Calu3 (cell line): ENCODE measurements at regions of chr2 and their contacts with region 1.

Region 1: DNA sequence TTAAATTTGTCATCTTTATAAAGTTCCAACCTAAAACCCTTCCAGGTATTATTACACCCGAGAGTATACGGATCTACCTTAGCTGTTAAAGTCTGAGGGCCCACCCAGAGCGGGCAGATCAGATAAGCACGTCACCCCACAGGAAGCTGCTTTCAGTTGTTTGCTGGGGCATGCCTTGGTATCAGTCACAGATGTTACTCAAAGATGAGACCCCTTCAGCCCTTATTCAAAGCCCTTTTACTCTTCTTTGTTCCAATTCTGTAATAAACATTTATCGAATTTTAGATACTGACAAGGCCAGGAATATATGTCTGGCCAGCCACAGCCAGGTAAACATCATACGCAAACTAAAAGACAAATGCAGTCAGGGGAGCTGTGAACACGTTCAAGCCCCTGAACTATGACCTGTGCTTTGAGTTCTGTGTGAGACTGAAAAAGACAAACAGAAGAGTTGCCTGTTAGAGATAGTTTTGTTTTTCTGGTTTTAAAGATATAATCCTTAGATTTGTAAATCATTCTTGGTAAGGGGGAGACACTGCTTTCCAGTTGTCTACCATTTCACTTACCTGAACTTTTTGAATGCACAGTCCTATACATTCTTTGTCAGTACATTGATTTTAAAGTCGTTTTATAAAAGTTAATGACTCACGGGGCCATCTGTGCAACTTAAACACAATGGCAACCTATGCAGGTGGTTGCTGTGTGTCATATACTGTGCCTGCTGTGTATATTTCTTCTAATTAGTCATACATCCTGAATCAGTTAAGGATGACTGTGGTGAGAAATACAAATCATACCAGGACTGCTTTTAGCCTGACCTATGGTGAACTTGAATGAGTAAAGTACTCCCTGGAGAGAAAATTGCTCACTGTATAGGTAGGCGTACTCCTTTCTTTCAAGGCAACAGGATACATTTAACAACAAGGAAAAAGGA is 100.5 kb upstream of the ITPRID2 start:
- DNase-seq: peak; percentile 50
- H3K4me3 Mint-ChIP-seq: peak overlapping the region; percentile 57
- H3K27ac Mint-ChIP-seq: peak overlapping the region; percentile 98
- H3K4me1 Mint-ChIP-seq: peaks cover 52% of the 10 kb centered on the region
- H3K27me3 Mint-ChIP-seq: no peaks in the 10 kb centered on the region
- CTCF ChIP-seq: no peak

Region 2: DNA sequence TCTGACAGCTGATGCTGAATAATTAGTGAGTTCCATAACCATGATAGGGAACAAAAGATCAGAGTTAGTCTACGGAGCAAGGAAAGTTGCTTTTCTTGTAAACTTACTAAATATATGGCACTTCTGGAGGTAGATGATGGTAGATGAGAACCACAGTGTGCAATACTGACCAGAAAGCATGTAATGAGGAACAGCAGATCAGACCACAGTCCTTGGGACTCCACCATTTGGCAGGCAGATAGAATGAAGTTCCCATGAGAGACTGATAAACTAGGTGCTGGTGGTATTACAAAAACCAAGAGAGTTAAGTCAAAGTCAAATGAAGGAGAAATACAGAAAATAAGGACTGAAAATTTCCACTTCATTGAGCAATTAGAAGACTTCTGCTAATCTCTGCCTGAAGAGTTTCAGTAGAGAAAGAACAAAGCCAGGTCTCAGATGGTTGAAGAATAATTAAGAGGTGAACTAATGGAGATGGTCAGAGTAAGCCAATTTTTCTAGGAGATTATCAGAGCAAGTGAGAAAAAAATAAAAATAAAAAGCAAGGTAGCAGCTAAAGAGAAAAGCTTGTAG is 144.5 kb before region 1 on chr2:
- CTCF ChIA-PET with region 1: no interaction called
- intact Hi-C with region 1: no loop called
- DNase-seq: no peak
- H3K4me3 Mint-ChIP-seq: no peak overlapping the region
- H3K27ac Mint-ChIP-seq: no peak overlapping the region
- H3K4me1 Mint-ChIP-seq: peaks cover 8% of the 10 kb centered on the region
- H3K27me3 Mint-ChIP-seq: no peaks in the 10 kb centered on the region
- CTCF ChIP-seq: no peak

Region 3: DNA sequence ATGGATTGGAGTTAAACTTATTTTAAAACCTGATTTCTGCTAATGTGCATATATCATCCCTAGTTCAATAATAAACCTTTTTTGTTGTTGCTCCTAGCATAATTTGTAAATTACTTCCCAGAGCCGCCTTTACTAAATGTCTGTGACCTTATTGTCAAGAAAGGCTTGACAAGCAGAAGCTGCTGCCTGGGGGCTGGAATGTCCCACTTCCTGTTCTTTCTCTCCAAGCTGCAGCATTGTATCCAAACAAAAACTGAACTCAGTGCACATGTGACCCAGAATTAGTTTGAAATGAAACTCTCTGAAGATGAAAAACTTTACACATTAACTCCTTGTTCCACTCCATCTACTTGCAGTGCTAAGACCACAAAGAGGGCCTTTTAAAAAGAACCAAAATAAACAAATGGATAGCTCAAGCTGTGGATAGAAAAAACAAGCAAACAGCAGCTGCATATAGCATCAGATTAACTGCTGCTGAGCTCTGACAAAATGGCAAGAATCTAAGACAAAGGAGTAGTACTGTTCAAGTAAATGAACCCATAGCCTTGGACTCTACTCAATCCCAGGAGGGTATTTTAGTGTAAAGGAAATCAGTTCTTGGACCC is 10.8 kb before region 1 on chr2:
- CTCF ChIA-PET with region 1: interaction called, 8 read pairs
- intact Hi-C with region 1: loop called (anchors 1 kb)
- DNase-seq: peak; percentile 31
- H3K4me3 Mint-ChIP-seq: no peak overlapping the region
- H3K27ac Mint-ChIP-seq: peak overlapping the region; percentile 90
- H3K4me1 Mint-ChIP-seq: peaks cover 65% of the 10 kb centered on the region
- H3K27me3 Mint-ChIP-seq: no peaks in the 10 kb centered on the region
- CTCF ChIP-seq: no peak

Region 4: GRCh38 chr2:181810823-181811695 is 20.1 kb after region 1 on chr2:
- CTCF ChIA-PET with region 1: interaction called, 5 read pairs
- intact Hi-C with region 1: loop called (anchors 1 kb)
- DNase-seq: peak; percentile 67
- H3K4me3 Mint-ChIP-seq: peak overlapping the region; percentile 38
- H3K27ac Mint-ChIP-seq: peak overlapping the region; percentile 95
- H3K4me1 Mint-ChIP-seq: peaks cover 78% of the 10 kb centered on the region
- H3K27me3 Mint-ChIP-seq: no peaks in the 10 kb centered on the region
- CTCF ChIP-seq: no peak

Region 5: DNA sequence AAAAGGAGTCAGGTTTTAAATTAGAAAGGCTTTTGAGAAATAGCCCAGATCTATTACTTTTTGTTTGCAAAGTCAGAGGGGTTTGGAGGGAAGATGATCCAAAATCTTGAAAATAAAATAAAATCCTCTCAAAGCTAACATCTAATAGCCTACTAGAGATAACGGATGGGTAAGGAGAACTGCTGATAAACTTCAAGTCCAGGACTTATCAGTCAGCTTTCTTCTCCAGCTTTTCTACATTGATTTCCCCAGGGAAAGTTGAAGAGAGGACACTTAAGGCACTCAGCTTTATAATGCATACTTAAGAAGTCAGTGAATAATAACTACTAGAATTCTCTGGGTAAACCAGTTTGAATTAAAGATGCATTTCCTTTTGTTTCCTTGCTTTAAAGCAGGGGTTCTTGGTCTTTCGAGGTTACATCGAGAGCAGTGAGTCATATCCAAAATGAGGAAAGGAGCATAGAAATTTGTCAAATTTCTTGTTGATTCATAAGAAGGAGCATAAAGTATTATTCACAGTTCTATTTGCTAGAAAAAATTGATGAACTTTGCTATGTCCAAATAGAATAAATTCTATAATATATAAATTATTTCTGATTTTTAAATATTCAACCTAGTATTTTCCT is 57.4 kb after region 1 on chr2:
- CTCF ChIA-PET with region 1: interaction called, 3 read pairs
- intact Hi-C with region 1: loop called (anchors 2 kb)
- DNase-seq: no peak
- H3K4me3 Mint-ChIP-seq: no peak overlapping the region
- H3K27ac Mint-ChIP-seq: peak overlapping the region; percentile 67
- H3K4me1 Mint-ChIP-seq: peaks cover 54% of the 10 kb centered on the region
- H3K27me3 Mint-ChIP-seq: no peaks in the 10 kb centered on the region
- CTCF ChIP-seq: no peak

Region 6: DNA sequence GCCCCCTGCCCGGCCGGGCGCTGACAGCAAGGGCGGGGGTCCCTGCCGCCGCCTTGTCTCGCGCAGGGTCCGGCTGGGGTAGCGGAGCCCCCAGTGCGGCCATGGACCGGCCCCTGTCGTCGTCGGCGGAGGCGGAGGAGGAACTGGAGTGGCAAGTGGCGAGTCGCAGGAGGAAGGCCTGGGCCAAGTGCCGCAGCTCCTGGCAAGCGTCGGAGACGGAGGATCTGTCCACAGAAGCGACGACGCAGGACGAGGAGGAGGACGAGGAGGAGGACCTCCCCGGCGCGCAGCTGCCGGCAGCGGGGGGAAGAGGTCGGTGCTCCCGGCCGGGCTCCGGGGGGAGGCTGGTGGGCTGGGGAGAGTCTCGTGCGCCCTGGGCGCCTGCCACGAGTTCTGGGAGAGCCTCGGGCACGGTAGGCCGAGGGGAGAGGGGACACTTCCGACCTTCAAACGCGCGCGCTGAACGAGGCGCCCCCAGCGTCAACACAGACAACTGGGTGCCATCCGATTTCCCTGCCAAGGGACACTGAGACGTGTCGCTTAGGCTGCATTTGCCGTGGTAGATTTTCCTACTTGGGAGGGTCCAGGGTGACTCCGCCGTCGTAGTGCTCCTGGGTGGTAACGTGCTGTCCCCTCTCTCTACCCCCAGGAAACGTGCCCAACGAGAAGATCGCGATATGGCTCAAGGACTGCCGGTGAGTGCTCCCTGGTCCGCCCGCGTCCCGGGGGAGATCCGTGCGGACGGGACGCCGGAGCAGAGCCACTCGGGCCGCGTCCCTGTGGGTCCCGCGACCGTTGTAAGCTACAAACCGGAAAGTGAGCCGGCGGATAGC is 101.2 kb after region 1 on chr2:
- CTCF ChIA-PET with region 1: interaction called, 4 read pairs
- intact Hi-C with region 1: loop called (anchors 1 kb)
- DNase-seq: peak; percentile 62
- H3K4me3 Mint-ChIP-seq: peak overlapping the region; percentile 98
- H3K27ac Mint-ChIP-seq: peak overlapping the region; percentile 90
- H3K4me1 Mint-ChIP-seq: peaks cover 29% of the 10 kb centered on the region
- H3K27me3 Mint-ChIP-seq: no peaks in the 10 kb centered on the region
- CTCF ChIP-seq: no peak